RWPE1 (cell line): ENCODE measurements at regions of chr1 and their contacts with region 1.

Region 1: GRCh38 chr1:227946624-227947385 is 927 bp downstream of the WNT9A start:
- DNase-seq: peak; percentile 86
- H3K27ac ChIP-seq: peak overlapping the region; percentile 95
- CTCF ChIP-seq: peak; percentile 86

Region 2: DNA sequence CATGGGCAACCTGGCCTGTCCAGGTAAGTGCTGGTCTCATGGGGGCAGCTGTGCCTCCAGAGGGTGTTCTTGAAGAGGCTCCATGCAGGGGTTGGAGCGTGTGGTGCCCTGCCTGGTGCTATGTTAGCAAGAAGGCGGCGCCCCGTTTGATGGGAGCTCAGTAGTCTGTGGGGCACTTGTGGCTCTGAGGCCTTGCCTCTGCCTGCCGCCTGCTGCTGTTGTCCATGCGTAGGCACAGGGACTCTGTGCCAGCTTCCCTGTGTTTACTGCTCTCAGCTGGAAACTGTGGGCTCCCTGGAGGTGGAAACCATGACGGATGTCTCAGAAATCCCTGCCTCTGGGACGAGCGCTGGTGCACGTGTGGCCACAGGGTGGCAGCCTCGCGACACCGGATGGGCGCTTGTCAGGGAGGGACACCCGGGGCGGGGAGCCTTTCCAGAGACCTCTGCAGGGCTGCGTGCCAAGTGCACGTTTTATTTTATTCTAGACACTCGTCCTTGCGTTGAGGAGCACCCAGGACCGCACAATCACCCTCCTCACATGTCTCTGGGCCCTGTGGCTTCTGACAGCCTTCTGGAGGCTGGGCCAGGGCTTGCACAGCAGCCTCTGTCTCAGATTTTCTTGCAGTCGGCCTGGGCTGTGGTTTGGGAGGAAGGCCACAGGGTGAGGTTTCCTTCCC is 184.4 kb before region 1 on chr1:
- CTCF ChIA-PET with region 1: interaction called, 11 read pairs
- POLR2A ChIA-PET with region 1: no interaction called
- DNase-seq: peak; percentile 97
- H3K27ac ChIP-seq: peak overlapping the region; percentile 85
- CTCF ChIP-seq: peak; percentile 93

Region 3: DNA sequence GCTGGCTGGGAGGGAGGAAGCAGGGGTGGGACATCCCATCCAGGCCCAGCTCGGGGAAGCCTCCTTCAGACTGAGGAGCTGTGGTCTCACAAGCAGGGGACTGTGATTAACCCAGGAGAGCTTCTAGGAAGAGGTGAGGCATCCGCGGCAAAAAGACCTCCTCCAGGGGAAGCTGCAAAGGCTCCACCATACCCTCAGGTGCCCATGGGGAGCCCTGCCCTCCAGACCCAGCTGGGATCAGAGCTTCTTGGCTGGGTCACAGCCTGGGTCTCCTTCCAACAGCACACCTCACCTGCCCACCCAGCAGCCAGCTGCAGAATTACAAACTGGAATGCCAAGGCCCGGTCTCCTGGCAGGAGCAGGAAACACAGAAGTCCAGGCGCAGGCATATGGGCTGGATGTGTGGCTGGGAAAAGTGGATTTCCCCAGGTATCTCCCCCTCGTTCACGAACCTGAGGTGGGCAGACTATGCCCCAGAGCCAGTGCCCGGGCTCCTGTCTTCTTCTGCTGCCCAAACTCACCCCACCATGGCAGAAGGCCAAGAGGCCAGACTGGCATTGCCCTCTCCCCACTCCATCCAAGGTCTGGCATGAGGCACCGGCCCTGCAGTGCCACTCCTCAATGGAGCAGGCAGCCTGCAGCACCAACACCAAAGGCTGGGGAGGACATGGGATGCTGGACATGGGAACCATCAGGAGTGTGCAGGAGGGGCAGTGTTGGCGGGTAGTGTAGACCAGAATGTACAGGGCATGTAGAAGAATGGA is 120.3 kb after region 1 on chr1:
- CTCF ChIA-PET with region 1: interaction called, 10 read pairs
- POLR2A ChIA-PET with region 1: no interaction called
- DNase-seq: no peak
- H3K27ac ChIP-seq: no peak overlapping the region
- CTCF ChIP-seq: no peak